WTC11 (cell line): ENCODE measurements at regions of chr2 and their contacts with region 1.

Region 1: GRCh38 chr2:238288650-238289573 is 502 bp upstream of the PER2 start:
- DNase-seq: peak; percentile 99
- ATAC-seq: peak; percentile 85
- H3K4me3 Mint-ChIP-seq: peak overlapping the region; percentile 79
- H3K27ac Mint-ChIP-seq: peak overlapping the region; percentile 58; the same call in 1 of the 2 replicates
- H3K4me1 Mint-ChIP-seq: peaks cover 23% of the 10 kb centered on the region
- H3K27me3 Mint-ChIP-seq: peaks cover 4% of the 10 kb centered on the region; the same call in 1 of the 2 replicates
- CTCF ChIP-seq: no peak

Region 2: GRCh38 chr2:238277695-238278094 is 11.2 kb before region 1 on chr2:
- CTCF ChIA-PET with region 1: interaction called, 32 read pairs
- POLR2A ChIA-PET with region 1: interaction called, 4 read pairs
- DNase-seq: peak; percentile 61
- ATAC-seq: peak; percentile 89
- H3K4me3 Mint-ChIP-seq: no peak overlapping the region
- H3K27ac Mint-ChIP-seq: peak overlapping the region; percentile 89
- H3K4me1 Mint-ChIP-seq: peaks cover 4% of the 10 kb centered on the region; the same call in 1 of the 2 replicates
- H3K27me3 Mint-ChIP-seq: no peaks in the 10 kb centered on the region
- CTCF ChIP-seq: no peak; the same call in 1 of the 2 replicates

Region 3: GRCh38 chr2:238336151-238336550 is 47.2 kb after region 1 on chr2:
- CTCF ChIA-PET with region 1: no interaction called
- POLR2A ChIA-PET with region 1: no interaction called
- DNase-seq: no peak
- ATAC-seq: no peak
- H3K4me3 Mint-ChIP-seq: no peak overlapping the region
- H3K27ac Mint-ChIP-seq: no peak overlapping the region
- H3K4me1 Mint-ChIP-seq: peaks cover 3% of the 10 kb centered on the region; the same call in 1 of the 2 replicates
- H3K27me3 Mint-ChIP-seq: no peaks in the 10 kb centered on the region
- CTCF ChIP-seq: no peak